ENCODE measurements at regions of chr3 and their contacts with region 1.

Region 1: DNA sequence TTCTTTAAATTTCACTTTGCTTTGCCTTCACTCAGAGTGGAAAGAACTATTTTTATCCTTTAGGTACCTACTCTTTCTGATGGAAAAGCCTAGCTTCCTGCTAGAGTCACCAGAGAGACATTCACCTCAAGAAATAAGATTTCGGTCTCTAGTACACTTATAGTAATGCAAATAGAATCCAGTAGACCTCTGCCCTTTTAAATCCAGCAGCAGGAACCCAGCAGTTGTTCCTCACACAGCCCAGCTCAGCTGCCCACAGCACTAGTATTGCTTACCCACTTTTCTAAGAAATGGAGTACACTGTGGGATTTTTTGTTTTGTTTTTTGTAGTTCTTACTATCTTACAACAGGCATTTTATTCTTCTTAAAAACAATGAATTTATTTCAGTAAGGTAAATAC is 497.0 kb upstream of the CCDC54 start:
- DNase-seq: no peak
- ATAC-seq: no peak
- H3K4me3 ChIP-seq: no peak overlapping the region
- H3K4me3 Mint-ChIP-seq: no peak overlapping the region
- H3K27ac ChIP-seq: no peak overlapping the region
- H3K27ac Mint-ChIP-seq: no peak overlapping the region
- H3K4me1 ChIP-seq: no peaks in the 10 kb centered on the region
- H3K4me1 Mint-ChIP-seq: no peaks in the 10 kb centered on the region
- H3K27me3 ChIP-seq: no peaks in the 10 kb centered on the region
- H3K27me3 Mint-ChIP-seq: no peaks in the 10 kb centered on the region

Region 2: DNA sequence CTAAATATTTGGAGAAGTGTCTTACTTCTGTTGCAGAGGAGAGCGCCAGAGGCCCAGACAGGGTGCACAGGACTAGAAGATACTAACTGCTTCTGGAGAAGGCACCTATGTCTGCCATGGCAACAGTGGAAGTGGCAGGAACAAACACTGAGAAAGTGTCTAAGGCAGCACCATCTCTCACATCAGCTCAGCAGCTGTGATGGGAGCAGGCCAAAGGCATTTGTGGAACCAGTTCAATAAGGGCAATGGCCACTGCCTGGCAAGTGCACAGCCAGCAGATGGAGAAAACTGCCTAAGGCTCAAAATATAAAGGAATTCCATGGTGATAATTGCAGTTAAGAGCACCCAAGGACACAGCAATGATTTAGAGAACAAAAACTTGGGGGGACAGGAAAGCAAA is 66.0 kb before region 1 on chr3:
- CTCF ChIA-PET with region 1: no interaction called
- POLR2A ChIA-PET with region 1: no interaction called
- intact Hi-C with region 1: loop called in 1 of 2 experiments (anchors 10 kb)
- DNase-seq: no peak
- ATAC-seq: no peak
- H3K4me3 ChIP-seq: no peak overlapping the region
- H3K4me3 Mint-ChIP-seq: no peak overlapping the region
- H3K27ac ChIP-seq: no peak overlapping the region
- H3K27ac Mint-ChIP-seq: no peak overlapping the region
- H3K4me1 ChIP-seq: no peaks in the 10 kb centered on the region
- H3K4me1 Mint-ChIP-seq: no peaks in the 10 kb centered on the region
- H3K27me3 ChIP-seq: no peaks in the 10 kb centered on the region
- H3K27me3 Mint-ChIP-seq: peaks cover 0 to 9% (median 8%) of the 10 kb centered on the region in 5 donors

Region 3: GRCh38 chr3:107013641-107014040 is 133.4 kb after region 1 on chr3:
- CTCF ChIA-PET with region 1: no interaction called
- POLR2A ChIA-PET with region 1: no interaction called
- intact Hi-C with region 1: no loop called
- DNase-seq: no peak
- ATAC-seq: no peak
- H3K4me3 ChIP-seq: no peak overlapping the region
- H3K4me3 Mint-ChIP-seq: no peak overlapping the region
- H3K27ac ChIP-seq: no peak overlapping the region
- H3K27ac Mint-ChIP-seq: no peak overlapping the region
- H3K4me1 ChIP-seq: no peaks in the 10 kb centered on the region
- H3K4me1 Mint-ChIP-seq: no peaks in the 10 kb centered on the region
- H3K27me3 ChIP-seq: no peaks in the 10 kb centered on the region
- H3K27me3 Mint-ChIP-seq: no peaks in the 10 kb centered on the region

Measured in naive thymus-derived CD4-positive, alpha-beta T cell (primary cell).